IMR-90 (cell line): ENCODE measurements at regions of chr5 and their contacts with region 1.

Region 1: GRCh38 chr5:79133657-79134451 is 22.2 kb downstream of the BHMT start:
- DNase-seq: peak; percentile 88
- ATAC-seq: peak; percentile 94
- H3K4me3 ChIP-seq: peak overlapping the region; percentile 31
- H3K27ac ChIP-seq: peak overlapping the region; percentile 60; the same call in 1 of the 2 replicates
- H3K4me1 ChIP-seq: no peaks in the 10 kb centered on the region
- H3K27me3 ChIP-seq: peaks cover 13% of the 10 kb centered on the region
- CTCF ChIP-seq: peak; percentile 86
- POLR2A ChIP-seq: no peak
- RAD21 ChIP-seq: peak; percentile 79

Region 2: GRCh38 chr5:79189439-79190234 is 55.8 kb after region 1 on chr5:
- CTCF ChIA-PET with region 1: interaction called, 10 read pairs
- POLR2A ChIA-PET with region 1: no interaction called
- dilution Hi-C with region 1: no loop called
- in situ Hi-C with region 1: no loop called
- intact Hi-C with region 1: no loop called
- DNase-seq: no peak
- ATAC-seq: no peak
- H3K4me3 ChIP-seq: no peak overlapping the region
- H3K27ac ChIP-seq: no peak overlapping the region
- H3K4me1 ChIP-seq: no peaks in the 10 kb centered on the region
- H3K27me3 ChIP-seq: no peaks in the 10 kb centered on the region
- CTCF ChIP-seq: no peak
- POLR2A ChIP-seq: no peak
- RAD21 ChIP-seq: no peak

Region 3: DNA sequence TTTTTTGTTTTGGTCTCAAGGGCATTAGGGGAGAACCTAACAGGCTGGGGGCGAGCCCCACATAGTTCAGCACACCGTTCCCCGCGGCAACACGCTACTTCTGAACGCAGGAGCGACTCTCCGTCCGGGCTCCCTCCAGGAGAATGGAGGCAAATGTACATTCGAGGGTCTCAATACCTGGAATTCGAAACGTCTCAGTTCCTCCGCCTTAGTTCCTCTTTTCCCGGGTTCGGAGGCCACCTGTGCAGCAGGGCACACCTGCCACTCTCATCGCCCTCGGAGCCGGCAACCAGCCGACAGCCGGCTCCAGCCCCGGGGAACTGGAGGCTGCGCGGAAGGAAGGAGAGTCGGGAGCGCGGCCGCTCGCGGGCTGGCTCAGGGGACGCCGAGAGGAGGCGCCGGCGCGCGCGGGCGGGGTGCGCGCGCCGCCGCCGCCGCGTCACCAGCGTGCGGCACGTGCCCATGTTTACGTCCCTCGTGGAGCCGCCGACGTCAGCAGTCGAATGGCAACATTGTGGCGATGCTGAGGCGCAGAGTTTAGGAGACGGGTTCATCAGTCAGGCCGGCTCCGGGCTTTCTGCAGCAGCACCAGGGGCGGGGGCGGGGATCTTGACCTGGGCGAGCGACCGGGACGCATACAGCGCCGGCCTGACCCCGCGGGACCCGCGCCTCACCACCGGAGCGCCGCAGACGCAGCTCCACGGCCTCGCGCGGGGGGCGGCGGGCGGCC is 101.9 kb after region 1 on chr5 and contains the start of gene JMY:
- CTCF ChIA-PET with region 1: interaction called, 3 read pairs
- POLR2A ChIA-PET with region 1: no interaction called
- dilution Hi-C with region 1: no loop called
- in situ Hi-C with region 1: no loop called
- intact Hi-C with region 1: loop called (anchors 2 kb)
- DNase-seq: peak; percentile 85
- ATAC-seq: peak; percentile 93
- H3K4me3 ChIP-seq: peak within 1 kb of the TSS; percentile 76
- H3K27ac ChIP-seq: peak within 1 kb of the TSS; percentile 51
- H3K4me1 ChIP-seq: peaks cover 1% of the 10 kb centered on the region; the same call in 1 of the 2 replicates
- H3K27me3 ChIP-seq: no peaks in the 10 kb centered on the region
- CTCF ChIP-seq: peak; percentile 36
- POLR2A ChIP-seq: peak; percentile 74
- RAD21 ChIP-seq: no peak; the same call in 1 of the 2 replicates
- total RNA-seq, gene JMY: 3.2 and 5.6 TPM in 2 replicates

Region 4: DNA sequence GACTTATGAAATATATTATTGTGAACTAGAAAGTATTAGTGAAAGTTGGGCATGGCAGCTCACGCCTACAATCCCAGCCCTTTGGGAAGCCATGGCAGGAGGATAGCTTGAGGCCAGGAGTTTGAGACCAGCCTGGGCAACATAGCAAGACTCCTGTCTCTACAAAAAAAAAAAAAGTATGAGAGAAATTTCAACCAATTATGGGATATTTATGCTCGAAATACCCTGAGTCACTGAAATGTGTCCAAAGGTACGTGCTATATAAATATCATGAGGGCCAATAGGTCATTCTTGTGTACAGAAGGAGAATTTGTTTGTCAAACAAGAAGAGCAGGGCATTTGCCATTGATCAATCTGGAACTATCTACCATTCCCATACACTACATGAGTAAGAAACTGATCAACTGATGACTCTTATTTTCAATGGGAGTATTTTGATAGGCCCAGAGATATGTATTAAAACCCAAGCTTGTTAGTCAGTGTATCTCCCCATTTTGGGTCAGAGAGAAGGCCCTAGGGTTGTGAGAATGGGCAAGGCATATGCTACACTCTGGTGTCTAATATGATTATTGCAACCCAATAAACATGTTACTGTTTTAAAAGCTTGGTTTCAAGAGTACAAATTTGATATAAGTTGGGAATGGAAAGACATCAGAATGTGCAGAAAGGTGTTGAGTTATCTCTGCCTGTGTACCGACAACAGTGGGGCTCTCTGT is 401.8 kb after region 1 on chr5:
- CTCF ChIA-PET with region 1: no interaction called
- POLR2A ChIA-PET with region 1: no interaction called
- dilution Hi-C with region 1: no loop called
- in situ Hi-C with region 1: no loop called
- intact Hi-C with region 1: loop called (anchors 5 kb)
- DNase-seq: peak; percentile 5
- ATAC-seq: peak; percentile 57; the same call in 1 of the 2 replicates
- H3K4me3 ChIP-seq: no peak overlapping the region
- H3K27ac ChIP-seq: no peak overlapping the region
- H3K4me1 ChIP-seq: no peaks in the 10 kb centered on the region
- H3K27me3 ChIP-seq: peaks cover 6% of the 10 kb centered on the region
- CTCF ChIP-seq: peak; percentile 38
- POLR2A ChIP-seq: no peak
- RAD21 ChIP-seq: peak; percentile 45

Region 5: GRCh38 chr5:79857714-79858409 is 724.0 kb after region 1 on chr5:
- CTCF ChIA-PET with region 1: interaction called, 3 read pairs
- POLR2A ChIA-PET with region 1: no interaction called
- dilution Hi-C with region 1: no loop called
- in situ Hi-C with region 1: no loop called
- intact Hi-C with region 1: loop called (anchors 5 kb)
- DNase-seq: peak; percentile 55
- ATAC-seq: peak; percentile 75
- H3K4me3 ChIP-seq: no peak overlapping the region
- H3K27ac ChIP-seq: no peak overlapping the region
- H3K4me1 ChIP-seq: no peaks in the 10 kb centered on the region
- H3K27me3 ChIP-seq: peaks cover 9% of the 10 kb centered on the region
- CTCF ChIP-seq: peak; percentile 86
- POLR2A ChIP-seq: no peak
- RAD21 ChIP-seq: peak; percentile 84